Activated CD4-positive, alpha-beta memory T cell treated with anti-CD3 and anti-CD28 coated beads for 36 hours (primary cell): ENCODE measurements at regions of chr2 and their contacts with region 1.

Region 1: DNA sequence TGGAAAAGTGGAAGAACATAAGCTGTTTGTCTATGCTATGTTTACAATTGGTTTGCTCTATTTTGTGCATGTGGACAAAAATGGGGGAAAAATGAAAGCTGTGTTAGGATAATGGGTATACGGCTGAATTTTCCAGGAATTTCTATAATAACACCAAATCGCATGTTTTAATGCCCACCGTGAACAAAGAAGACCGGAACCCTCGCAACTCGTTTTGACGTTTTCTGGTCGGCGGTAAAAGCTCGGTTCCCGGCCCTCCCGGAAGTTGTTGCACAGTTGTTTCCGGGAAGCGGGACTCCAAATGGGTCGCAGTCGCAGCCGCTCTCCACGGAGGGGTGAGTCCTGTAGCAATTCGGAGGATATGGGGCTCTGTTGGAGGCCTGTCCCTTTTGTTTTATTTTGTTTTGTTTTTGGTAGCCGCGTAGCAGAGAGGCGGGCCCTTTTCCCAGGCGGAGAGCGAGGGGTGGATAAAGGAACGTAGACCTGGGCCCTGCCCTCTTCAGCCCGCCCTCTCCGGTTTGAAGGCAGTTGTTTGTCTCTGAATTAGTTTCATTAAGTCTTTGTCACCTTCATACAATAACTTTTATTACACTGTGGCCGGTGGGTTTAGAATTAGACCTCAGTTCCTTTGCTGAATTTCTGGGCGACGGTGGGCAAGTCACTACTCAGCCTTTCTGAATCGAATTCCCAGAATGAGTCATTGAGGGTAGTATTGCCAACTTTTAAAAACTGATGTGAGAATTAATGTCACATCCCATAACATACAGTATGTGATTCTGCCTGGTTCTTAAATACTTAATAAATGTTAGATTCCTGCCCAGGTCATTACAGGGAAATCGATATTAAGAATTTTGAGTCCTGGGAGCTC is at the start of gene SNRNP27:
- DNase-seq: peak; percentile 87
- H3K4me3 Mint-ChIP-seq: peak within 1 kb of the TSS; percentile 99
- H3K27ac Mint-ChIP-seq: peak within 1 kb of the TSS; percentile 96
- H3K4me1 Mint-ChIP-seq: peaks cover 46% of the 10 kb centered on the region
- H3K27me3 Mint-ChIP-seq: no peaks in the 10 kb centered on the region
- total RNA-seq, gene SNRNP27: 67.5 to 70.4 TPM

Region 2: DNA sequence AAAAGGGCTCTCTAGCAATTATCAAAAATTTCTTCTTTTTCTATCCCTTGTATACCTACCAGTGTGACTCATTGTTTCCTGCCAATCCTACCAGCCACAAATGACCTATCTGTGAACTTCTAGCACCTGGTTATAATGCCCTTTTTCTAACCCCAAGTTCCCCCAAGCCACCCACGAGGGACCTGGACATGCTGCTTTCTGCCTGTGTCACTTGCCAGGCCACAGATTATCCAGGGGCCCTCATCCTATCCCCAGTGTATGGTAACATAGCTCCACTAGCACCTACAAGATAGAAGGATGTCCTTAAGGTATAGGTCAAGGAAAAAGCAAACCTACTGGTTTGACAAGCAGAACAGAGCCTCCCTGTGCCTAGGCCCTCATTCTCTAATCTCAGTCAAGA is 277.2 kb before region 1 on chr2:
- CTCF ChIA-PET with region 1: no interaction called
- POLR2A ChIA-PET with region 1: no interaction called
- intact Hi-C with region 1: loop called (anchors 10 kb)
- DNase-seq: peak; percentile 67
- H3K4me3 Mint-ChIP-seq: peak overlapping the region; percentile 7
- H3K27ac Mint-ChIP-seq: peak overlapping the region; percentile 38
- H3K4me1 Mint-ChIP-seq: peaks cover 40% of the 10 kb centered on the region
- H3K27me3 Mint-ChIP-seq: no peaks in the 10 kb centered on the region

Region 3: DNA sequence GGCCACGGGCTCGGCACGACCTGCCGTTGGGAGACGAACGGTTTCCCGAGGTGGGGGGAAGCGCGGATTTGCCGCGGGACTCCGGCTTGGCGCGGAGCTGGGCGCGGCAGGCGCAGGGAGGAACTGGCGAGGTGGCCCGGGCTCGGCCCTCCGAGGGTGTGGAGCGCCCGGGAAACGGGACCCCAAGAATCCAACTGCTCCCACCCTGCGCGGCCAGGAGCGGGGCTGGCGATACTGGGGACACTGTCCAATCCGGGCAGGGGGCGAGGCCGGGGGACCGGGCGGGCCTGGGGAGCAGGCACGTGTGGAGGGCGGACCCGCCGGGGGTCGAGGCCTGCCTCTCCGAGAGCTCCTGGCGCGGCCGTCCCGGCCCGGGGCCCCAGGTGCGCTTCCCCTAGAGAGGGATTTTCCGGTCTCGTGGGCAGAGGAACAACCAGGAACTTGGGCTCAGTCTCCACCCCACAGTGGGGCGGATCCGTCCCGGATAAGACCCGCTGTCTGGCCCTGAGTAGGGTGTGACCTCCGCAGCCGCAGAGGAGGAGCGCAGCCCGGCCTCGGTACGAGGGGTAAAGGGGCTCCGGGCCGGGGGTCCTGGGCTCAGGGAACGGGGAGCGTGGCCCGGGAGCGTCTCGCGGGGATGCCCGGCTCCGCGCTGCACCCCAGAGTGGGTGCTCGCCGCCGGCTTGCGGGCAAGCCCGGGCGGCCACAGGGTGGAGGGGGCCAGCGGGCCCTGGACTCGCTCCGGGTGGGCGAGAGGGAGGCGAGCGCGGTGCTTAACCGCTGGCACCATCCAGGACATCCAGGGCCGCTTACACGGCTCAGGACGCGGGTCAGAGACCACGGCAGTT is 152.1 kb before region 1 on chr2 and contains the start of gene ANXA4:
- CTCF ChIA-PET with region 1: no interaction called
- POLR2A ChIA-PET with region 1: no interaction called
- intact Hi-C with region 1: loop called (anchors 5 kb)
- DNase-seq: peak; percentile 76
- H3K4me3 Mint-ChIP-seq: peak within 1 kb of the TSS; percentile 81
- H3K27ac Mint-ChIP-seq: peak within 1 kb of the TSS; percentile 82
- H3K4me1 Mint-ChIP-seq: peaks cover 11% of the 10 kb centered on the region
- H3K27me3 Mint-ChIP-seq: no peaks in the 10 kb centered on the region
- total RNA-seq, gene ANXA4: 41.3 to 43.2 TPM

Region 4: GRCh38 chr2:69829256-69830046 is 64.5 kb before region 1 on chr2 and contains the start of gene GMCL1:
- CTCF ChIA-PET with region 1: no interaction called
- POLR2A ChIA-PET with region 1: interaction called, 3 read pairs
- intact Hi-C with region 1: loop called (anchors 2 kb)
- DNase-seq: peak; percentile 99
- H3K4me3 Mint-ChIP-seq: peak within 1 kb of the TSS; percentile 81
- H3K27ac Mint-ChIP-seq: peak within 1 kb of the TSS; percentile 92
- H3K4me1 Mint-ChIP-seq: peaks cover 40% of the 10 kb centered on the region
- H3K27me3 Mint-ChIP-seq: no peaks in the 10 kb centered on the region
- total RNA-seq, gene GMCL1: 20.6 to 22.1 TPM